BJ (cell line): ENCODE measurements at regions of chr14 and their contacts with region 1.

Region 1: DNA sequence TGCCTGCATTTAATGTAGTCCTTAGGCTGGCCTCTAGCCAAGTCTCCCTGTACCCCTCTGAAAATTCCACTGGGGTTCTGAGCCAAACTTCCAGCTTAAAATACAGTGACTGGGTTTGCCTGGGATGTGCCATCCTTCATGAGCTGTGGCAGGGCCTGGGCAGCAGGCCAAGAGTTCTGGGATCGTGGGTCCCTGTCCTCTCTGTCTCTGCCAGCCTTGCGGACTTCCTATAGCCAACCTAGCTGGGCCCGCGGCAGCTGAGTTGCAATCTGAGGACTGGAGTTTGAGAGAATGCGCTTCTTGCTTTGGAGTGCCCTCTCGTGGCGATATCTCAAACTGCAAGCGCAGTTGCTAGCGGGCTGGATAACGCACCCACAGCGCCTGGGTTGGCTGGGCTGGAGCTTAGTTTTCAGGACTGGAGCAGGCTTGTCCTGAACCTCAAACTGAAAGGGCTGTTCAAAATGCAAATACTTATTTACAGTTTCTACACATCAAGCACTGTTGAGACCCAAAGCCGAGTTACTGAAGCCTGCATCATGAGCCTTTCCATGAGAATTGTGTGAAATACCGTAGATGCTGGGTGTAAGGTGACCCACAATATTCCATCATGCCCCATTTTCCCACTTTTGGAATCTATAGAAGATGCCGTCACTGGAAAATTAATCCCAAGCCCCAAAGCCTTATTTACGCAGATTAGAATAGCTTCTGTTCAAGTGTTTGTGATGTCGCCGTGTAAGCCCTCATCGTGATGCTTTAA is 7.3 kb upstream of the IFI27L2 start:
- DNase-seq: peak; percentile 15
- H3K4me3 ChIP-seq: no peak overlapping the region
- H3K27me3 ChIP-seq: peaks cover 4% of the 10 kb centered on the region
- CTCF ChIP-seq: peak; percentile 98

Region 2: DNA sequence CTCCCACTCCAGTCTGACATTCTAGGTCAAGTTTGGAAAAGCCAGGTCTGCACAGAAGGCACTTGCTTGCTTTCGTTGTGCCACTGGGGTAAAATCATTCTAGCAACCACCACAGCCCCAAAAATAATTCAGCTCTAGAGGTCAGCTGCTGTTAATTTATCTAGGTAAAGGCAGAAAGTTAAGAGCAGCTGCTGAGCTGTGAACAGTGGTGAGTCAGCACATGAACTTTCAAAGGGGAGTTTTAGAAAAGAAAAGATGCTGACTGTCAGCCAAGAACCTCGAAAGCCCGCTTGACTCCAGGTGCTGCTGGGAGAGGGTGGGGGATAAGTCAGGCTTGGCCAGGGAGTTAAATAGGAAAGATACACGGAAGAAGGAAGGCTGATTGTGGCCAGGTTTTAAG is 127.0 kb before region 1 on chr14:
- CTCF ChIA-PET with region 1: interaction called, 10 read pairs
- POLR2A ChIA-PET with region 1: no interaction called
- DNase-seq: no peak
- H3K4me3 ChIP-seq: no peak overlapping the region
- H3K27me3 ChIP-seq: peaks cover 5% of the 10 kb centered on the region
- CTCF ChIP-seq: no peak

Region 3: DNA sequence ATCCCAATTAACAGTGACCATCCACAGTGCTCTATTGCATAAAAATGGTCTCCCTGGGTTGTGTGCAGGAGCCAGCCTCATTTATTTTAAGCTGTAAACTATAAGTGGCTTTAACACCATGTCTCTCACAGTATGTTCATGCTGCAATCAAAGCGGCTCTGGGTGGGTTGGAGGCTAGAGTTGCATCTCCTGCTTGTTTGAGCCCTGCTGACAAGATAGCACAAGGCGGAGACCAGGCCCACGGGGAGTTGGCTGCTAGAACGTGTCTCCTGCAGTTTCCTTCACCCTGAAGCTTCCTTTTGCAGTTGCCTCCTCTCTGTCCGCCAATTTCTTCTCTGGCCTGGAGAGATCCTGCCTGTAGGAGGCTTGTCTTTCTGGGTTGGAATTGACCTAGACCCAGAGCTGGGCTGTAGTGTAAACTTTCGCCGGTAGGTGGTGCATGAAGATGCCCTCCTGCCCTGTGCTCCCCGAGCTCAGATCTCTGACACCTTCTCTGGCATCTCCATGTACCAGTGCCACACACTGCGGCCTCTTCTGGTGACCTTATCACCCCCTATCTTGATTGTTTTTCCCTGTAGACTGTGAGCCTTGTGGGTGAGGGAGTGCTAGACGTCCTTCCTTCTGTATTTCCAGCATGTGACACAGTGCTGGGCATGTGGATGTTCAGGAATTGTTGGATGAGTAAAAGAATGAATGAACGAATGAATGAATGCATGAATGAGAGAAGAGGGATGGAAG is 100.3 kb before region 1 on chr14:
- CTCF ChIA-PET with region 1: interaction called, 248 read pairs
- POLR2A ChIA-PET with region 1: interaction called, 5 read pairs
- DNase-seq: no peak
- H3K4me3 ChIP-seq: no peak overlapping the region
- H3K27me3 ChIP-seq: no peaks in the 10 kb centered on the region
- CTCF ChIP-seq: peak; percentile 88

Region 4: GRCh38 chr14:94056579-94057308 is 80.0 kb before region 1 on chr14:
- CTCF ChIA-PET with region 1: interaction called, 51 read pairs
- POLR2A ChIA-PET with region 1: no interaction called
- DNase-seq: no peak
- H3K4me3 ChIP-seq: no peak overlapping the region
- H3K27me3 ChIP-seq: no peaks in the 10 kb centered on the region
- CTCF ChIP-seq: no peak

Region 5: DNA sequence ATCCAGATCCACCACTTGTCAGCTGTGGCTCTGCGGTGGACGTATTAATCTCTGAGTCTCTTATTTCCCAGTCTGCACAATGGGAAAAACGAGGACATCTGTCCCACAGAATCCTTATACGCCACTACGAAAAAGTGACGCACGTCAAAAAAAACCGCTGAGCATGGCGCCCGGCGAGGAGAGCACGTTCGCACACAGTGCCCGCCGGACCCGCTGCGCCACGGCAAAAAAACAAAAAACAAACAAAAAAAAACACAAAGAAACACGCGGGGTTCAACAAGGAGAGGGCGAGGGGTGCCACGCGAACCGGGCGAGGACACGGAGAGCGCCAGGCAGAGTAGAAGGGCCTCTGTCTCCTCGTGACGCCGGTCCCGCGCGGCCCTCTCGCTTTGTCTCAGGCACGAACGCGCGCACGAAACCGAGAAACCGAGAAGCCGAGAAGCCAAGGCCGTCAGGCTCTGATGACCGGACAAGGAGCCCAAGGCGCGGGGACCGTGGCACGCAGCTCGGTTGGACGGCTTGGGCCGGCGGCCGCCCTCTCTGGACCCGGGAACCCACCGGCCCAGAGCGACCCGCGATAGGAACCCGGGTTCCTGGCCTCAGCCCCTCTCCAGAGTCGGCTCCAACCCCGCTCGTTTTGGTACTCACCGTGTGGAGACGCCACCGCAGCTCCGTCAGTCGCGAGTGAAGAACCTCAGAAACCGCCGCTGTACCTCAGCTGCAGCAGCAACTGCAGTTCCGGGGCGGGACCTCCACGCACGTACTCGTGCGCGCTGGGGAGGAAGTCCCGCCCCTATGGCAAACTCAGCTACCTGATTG is 56.1 kb before region 1 on chr14 and contains the start of gene DDX24:
- CTCF ChIA-PET with region 1: interaction called, 15 read pairs
- POLR2A ChIA-PET with region 1: interaction called, 5 read pairs
- DNase-seq: no peak
- H3K4me3 ChIP-seq: peak within 1 kb of the TSS; percentile 74
- H3K27me3 ChIP-seq: no peaks in the 10 kb centered on the region
- CTCF ChIP-seq: no peak
- polyA plus RNA-seq, gene DDX24: 147 and 167 TPM in 2 replicates

Region 6: DNA sequence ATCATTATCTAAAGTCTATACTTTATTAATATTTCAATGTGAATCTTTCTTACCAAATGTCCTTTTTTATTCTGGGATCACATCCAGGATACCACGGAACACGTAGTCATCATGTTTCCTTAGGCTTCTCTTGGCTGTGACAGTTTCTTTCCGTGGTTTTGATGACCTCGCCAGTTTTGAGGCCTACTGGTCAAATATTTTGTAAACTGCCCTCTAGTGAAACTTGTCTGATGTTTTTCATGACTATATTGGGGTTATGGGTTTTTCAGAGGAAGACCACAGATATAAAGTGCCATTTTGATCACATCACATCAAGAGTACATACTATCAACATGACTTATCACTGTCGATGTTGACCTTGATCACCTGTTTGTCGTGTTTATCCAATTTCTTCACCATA is 200.5 kb after region 1 on chr14:
- CTCF ChIA-PET with region 1: no interaction called
- POLR2A ChIA-PET with region 1: no interaction called
- DNase-seq: no peak
- H3K4me3 ChIP-seq: no peak overlapping the region
- H3K27me3 ChIP-seq: no peaks in the 10 kb centered on the region
- CTCF ChIP-seq: no peak

Region 7: DNA sequence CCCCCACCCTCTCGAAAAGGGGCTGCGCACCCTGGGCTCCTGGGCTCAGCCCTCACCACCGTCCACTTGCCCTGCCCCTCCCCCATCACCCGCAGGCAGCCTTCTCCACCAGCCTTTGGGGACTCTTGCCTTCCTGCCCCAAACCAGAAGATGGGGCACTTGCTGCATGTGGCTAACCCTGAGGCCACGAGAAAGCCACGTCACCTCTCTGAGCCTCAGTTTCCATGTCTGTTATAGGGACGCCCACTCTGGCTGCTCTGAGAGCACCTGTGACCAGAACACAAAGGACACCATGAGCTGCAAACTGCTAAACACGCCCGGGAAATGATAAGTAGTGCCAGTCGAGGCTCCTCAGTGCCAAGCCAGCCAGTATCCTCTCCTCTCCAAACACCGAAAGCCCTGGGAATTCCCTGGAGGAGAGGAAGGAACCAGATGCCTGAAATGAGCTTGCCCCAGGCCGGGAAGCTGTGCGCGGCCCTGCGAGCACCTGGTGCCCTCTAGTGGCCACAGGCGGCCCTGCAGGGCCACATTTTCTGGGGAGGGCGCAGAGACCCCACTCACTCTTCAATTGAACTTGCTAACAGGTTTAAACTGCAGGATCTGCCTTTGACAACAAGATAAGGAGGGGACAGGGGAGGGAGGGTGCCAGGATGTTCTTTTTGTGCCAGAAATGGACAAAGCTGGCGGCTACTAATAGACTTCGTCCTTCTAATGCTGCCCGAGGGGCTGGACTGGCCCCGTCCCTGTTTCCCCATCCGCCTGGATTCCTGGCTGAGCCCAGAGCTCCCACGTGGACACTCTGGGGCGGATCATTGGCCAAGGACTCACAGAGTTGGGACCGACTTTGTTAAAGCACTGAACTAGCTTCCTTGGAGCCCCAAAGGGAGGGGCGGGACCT is 349.4 kb after region 1 on chr14:
- CTCF ChIA-PET with region 1: interaction called, 16 read pairs
- POLR2A ChIA-PET with region 1: no interaction called
- DNase-seq: no peak
- H3K4me3 ChIP-seq: no peak overlapping the region
- H3K27me3 ChIP-seq: no peaks in the 10 kb centered on the region; the same call in 1 of the 2 replicates
- CTCF ChIP-seq: peak; percentile 100

Region 8: DNA sequence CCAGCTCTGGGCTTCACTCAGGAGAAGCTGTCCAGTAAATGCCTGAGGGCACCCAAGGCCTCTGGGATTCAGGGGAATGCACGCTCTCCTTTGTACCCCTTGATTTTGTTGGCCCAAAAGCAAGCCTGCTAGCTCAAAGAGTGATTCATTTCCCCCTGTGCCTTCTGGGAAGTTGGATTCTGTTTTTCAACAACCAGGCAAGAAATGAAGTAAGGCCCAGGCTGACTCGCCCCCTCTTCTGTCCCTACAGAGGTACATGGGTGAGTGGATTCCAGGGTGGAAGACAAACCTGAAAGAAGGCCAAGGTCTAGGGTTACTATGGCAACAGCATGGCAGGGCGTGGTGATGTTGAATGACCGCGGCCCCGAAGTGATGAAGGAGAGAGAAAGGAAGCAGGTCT is 435.2 kb after region 1 on chr14:
- CTCF ChIA-PET with region 1: no interaction called
- POLR2A ChIA-PET with region 1: no interaction called
- DNase-seq: no peak
- H3K4me3 ChIP-seq: no peak overlapping the region
- H3K27me3 ChIP-seq: no peaks in the 10 kb centered on the region
- CTCF ChIP-seq: no peak